Testis (tissue), 5 donors: ENCODE measurements at regions of chr19 and their contacts with region 1.

Region 1: GRCh38 chr19:9934132-9934950 is 2.0 kb downstream of the OLFM2 start:
- DNase-seq: peak; percentile 90
- H3K4me3 ChIP-seq: no peak overlapping the region
- H3K27ac ChIP-seq: no peak overlapping the region
- H3K4me1 ChIP-seq: peaks cover 21% of the 10 kb centered on the region
- H3K27me3 ChIP-seq: no peaks in the 10 kb centered on the region
- CTCF ChIP-seq: peak; percentile 81 to 89 (median 89)
- POLR2A ChIP-seq: no peak

Region 2: DNA sequence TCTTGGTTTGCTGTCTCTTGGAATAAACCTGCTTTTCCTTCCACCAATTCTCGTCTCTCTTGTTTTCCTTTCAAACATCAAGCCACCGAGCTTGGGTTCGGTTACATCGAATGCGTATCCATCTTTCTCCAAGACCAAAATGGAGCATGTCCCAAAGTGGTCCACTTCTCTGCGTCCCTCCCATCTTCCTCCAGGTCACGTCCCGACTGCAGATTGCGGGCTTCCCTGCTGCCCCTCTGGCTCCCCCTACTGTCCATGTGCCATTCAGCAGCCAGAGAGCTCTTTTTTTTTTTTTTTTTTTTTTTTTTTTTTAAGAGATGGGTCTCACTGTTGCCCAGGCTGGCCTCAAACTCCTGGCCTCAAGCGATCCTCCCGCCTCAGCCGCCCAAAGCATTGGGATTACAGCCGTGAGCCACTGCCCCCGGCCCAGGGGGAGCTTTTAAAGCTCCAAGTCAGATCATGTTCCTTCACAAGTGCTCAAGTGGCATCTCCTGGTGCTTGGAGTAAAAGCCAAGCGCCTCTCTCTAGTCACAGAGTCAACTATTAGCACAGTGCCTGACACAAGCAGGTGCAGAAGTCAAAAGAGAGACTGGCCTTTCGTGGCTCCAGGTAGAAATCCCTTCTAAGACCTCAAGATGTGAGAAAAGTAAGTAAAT is 66.0 kb after region 1 on chr19:
- intact Hi-C with region 1: loop called (anchors 10 kb)
- DNase-seq: peak; percentile 87
- H3K4me3 ChIP-seq: no peak overlapping the region
- H3K27ac ChIP-seq: no peak overlapping the region
- H3K4me1 ChIP-seq: no peaks in the 10 kb centered on the region
- H3K27me3 ChIP-seq: no peaks in the 10 kb centered on the region
- CTCF ChIP-seq: peak; percentile 6 to 74 (median 58)
- POLR2A ChIP-seq: no peak

Region 3: DNA sequence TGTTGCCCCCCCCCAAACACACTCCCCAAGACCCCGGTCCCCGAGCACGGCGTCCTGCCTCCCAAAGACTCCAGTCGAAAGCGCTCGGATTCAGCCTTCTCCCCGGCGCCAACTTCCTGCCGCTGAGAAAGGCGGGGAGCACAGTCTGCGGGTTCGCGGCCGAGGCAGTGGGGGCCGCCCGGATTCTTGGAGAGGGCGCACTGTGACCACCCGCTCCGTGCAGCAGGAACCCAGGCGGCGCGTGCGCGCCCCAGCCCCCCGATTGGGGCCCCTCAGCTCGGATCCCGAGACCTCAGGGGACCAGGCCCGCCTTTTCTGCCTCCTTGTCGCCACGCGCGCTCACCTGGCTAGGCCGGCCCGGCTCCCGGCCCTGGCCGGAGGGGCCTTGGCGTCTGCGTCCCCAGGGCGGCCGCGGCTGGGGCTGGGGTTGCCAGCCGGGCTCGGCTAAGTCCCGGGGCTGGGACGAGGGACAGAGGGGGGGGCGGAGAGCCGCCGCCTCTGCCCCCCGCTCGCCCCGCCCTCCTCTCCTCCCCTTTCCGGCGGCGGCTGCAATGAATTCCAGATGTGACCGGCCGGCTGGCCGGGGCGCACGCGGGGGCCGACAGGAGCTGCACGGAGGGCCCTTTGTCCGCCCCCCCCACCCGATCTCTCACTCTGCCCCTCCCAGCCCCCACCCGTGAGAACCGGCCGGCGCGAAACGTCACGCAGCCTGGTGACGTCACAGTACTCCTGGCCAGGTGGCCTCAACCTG is 296.7 kb after region 1 on chr19 and contains the start of gene S1PR2:
- intact Hi-C with region 1: loop called (anchors 10 kb)
- DNase-seq: peak; percentile 70
- H3K4me3 ChIP-seq: peak within 1 kb of the TSS; percentile 86 to 89
- H3K27ac ChIP-seq: peak within 1 kb of the TSS; percentile 86 to 93
- H3K4me1 ChIP-seq: peaks cover 30% of the 10 kb centered on the region
- H3K27me3 ChIP-seq: no peaks in the 10 kb centered on the region
- CTCF ChIP-seq: no peak
- POLR2A ChIP-seq: no peak
- total RNA-seq, gene S1PR2: 8.7 to 13.7 TPM